ENCODE measurements at regions of chr19 and their contacts with region 1.

Region 1: GRCh38 chr19:35213663-35214632 is 14.6 kb downstream of the FAM187B start:
- DNase-seq: peak; percentile 53 to 96 (median 84)
- ATAC-seq: peak; percentile 51
- H3K4me3 Mint-ChIP-seq: peak overlapping the region; percentile 57 to 85 (median 77)
- H3K27ac Mint-ChIP-seq: peak overlapping the region; percentile 95 to 100 (median 100)
- H3K4me1 Mint-ChIP-seq: peaks cover 20 to 82% (median 70%) of the 10 kb centered on the region in 4 donors
- H3K27me3 Mint-ChIP-seq: peaks cover 0 to 2% (median 0%) of the 10 kb centered on the region in 5 donors

Region 2: DNA sequence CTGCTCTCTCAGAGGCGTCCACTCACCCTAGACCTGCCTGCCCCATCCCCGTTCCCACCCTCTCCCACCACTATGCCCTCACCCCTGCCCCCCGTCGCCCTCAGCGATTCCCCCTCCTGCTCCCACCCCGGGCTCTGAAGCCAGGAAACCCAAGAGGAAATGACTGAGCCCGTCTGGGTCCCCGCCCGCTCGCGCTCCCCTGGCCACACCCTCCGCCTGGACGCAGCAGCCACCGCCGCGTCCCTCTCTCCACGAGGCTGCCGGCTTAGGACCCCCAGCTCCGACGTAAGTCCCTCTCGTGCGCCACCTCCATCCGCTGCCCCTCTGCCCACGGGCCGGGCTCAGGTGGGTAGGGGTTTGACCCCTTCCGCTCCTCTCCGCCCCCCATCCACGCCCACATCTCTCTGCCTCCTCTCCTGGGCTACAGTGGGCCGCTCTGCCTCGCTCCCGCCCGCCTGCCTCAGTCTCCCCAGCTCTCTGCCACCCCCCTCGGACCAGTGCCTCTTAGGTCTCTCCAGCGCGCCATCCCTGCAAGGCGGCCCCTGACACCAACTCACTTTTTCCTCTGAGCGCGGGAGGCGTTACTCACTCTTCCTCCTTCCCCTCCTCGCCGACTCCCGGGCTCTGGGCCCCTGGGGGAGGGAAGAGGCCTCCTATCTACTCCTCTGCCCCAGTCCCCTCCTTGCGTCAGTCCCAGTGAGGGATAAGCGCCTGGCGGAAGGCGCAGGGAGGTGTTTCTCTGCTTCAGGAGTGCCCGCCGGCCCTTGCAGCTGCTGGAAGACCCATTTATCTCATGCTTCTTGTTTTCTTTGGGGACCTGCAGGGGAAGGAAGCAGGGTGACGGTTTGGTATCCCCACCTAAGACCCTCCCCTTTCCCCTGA is 59.2 kb before region 1 on chr19 and contains the start of gene FXYD5:
- POLR2A ChIA-PET with region 1: interaction called, 77 read pairs
- DNase-seq: peak; percentile 59 to 83 (median 64)
- ATAC-seq: peak; percentile 73 to 77
- H3K4me3 Mint-ChIP-seq: peak within 1 kb of the TSS; percentile 98 to 100 (median 100)
- H3K27ac Mint-ChIP-seq: peak within 1 kb of the TSS; percentile 94 to 100 (median 99)
- H3K4me1 Mint-ChIP-seq: peaks cover 33 to 72% (median 60%) of the 10 kb centered on the region in 4 donors
- H3K27me3 Mint-ChIP-seq: no peaks in the 10 kb centered on the region
- polyA plus RNA-seq, gene FXYD5: 281 to 544 (median 452) TPM

Region 3: GRCh38 chr19:35177377-35178274 is 36.3 kb before region 1 on chr19:
- POLR2A ChIA-PET with region 1: interaction called, 30 read pairs
- DNase-seq: no peak
- ATAC-seq: no peak
- H3K4me3 Mint-ChIP-seq: no peak overlapping the region
- H3K27ac Mint-ChIP-seq: peak overlapping the region in 5 of 10 donors; percentile 24 to 70 (median 41)
- H3K4me1 Mint-ChIP-seq: peaks cover 8 to 50% (median 48%) of the 10 kb centered on the region in 4 donors
- H3K27me3 Mint-ChIP-seq: no peaks in the 10 kb centered on the region

Region 4: DNA sequence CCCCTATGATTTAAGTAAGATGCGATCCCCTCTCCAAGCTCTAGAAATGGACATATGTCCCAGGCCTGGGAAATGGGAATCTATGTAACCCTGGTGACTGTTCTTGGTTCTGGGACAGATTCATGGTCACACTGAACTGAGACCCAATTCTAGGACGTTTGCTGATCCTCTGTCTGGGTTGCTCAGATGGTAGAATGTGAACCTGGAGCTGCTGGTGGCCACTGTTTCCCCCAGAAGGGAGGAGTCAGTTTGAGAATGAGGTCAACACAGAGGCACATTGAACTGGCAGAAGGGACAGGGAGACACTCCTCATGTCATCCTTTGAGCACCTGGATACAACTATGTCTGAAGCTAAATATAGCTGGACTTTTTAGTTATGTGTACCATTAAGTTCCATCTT is 14.5 kb before region 1 on chr19:
- POLR2A ChIA-PET with region 1: interaction called, 13 read pairs
- DNase-seq: no peak
- ATAC-seq: no peak
- H3K4me3 Mint-ChIP-seq: no peak overlapping the region
- H3K27ac Mint-ChIP-seq: peak overlapping the region in 3 of 10 donors; percentile 9 to 47 (median 34)
- H3K4me1 Mint-ChIP-seq: peaks cover 22 to 60% (median 43%) of the 10 kb centered on the region in 4 donors
- H3K27me3 Mint-ChIP-seq: no peaks in the 10 kb centered on the region

Region 5: GRCh38 chr19:35247526-35248306 is 33.8 kb after region 1 on chr19:
- POLR2A ChIA-PET with region 1: interaction called, 234 read pairs
- DNase-seq: peak; percentile 32 to 73 (median 55)
- ATAC-seq: peak; percentile 41 to 46
- H3K4me3 Mint-ChIP-seq: peak overlapping the region; percentile 93 to 98 (median 94)
- H3K27ac Mint-ChIP-seq: peak overlapping the region; percentile 93 to 99 (median 98)
- H3K4me1 Mint-ChIP-seq: peaks cover 23 to 49% (median 42%) of the 10 kb centered on the region in 4 donors
- H3K27me3 Mint-ChIP-seq: peaks cover 0 to 2% (median 0%) of the 10 kb centered on the region in 5 donors